ENCODE measurements at regions of chr2 and their contacts with region 1.

Region 1: GRCh38 chr2:110677530-110678456 is at the start of gene BUB1:
- DNase-seq: peak; percentile 87 to 98
- H3K4me3 ChIP-seq: peak within 1 kb of the TSS; percentile 79 to 91 (median 81)
- H3K27ac ChIP-seq: peak within 1 kb of the TSS; percentile 67
- H3K4me1 ChIP-seq: peaks cover 10 to 22% (median 12%) of the 10 kb centered on the region in 4 experiments
- H3K27me3 ChIP-seq: peaks cover 0 to 3% (median 0%) of the 10 kb centered on the region in 4 experiments; a peak in 2 of 7 replicates
- CTCF ChIP-seq: no peak
- EP300 ChIP-seq: no peak
- POLR2A ChIP-seq: peak; percentile 76 to 85
- RAD21 ChIP-seq: peak in 1 of 2 experiments; percentile 8; a peak in 1 of 4 replicates
- total RNA-seq, gene BUB1: 113 and 118 TPM in 2 replicates

Region 2: GRCh38 chr2:110702514-110703380 is 25.0 kb after region 1 on chr2:
- CTCF ChIA-PET with region 1: no interaction called
- POLR2A ChIA-PET with region 1: no interaction called
- DNase-seq: no peak
- H3K4me3 ChIP-seq: no peak overlapping the region
- H3K27ac ChIP-seq: no peak overlapping the region
- H3K4me1 ChIP-seq: no peaks in the 10 kb centered on the region
- H3K27me3 ChIP-seq: no peaks in the 10 kb centered on the region
- CTCF ChIP-seq: no peak
- EP300 ChIP-seq: no peak
- POLR2A ChIP-seq: no peak
- RAD21 ChIP-seq: no peak

Region 3: GRCh38 chr2:110732422-110733413 is 54.9 kb after region 1 on chr2 and contains the start of gene ACOXL:
- CTCF ChIA-PET with region 1: interaction called, 3 read pairs
- POLR2A ChIA-PET with region 1: interaction called, 11 read pairs
- DNase-seq: peak; percentile 68 to 89
- H3K4me3 ChIP-seq: peak within 1 kb of the TSS; percentile 61 to 81 (median 79)
- H3K27ac ChIP-seq: no peak within 1 kb of the TSS
- H3K4me1 ChIP-seq: peaks cover 3 to 18% (median 10%) of the 10 kb centered on the region in 4 experiments
- H3K27me3 ChIP-seq: peaks cover 0 to 10% (median 2%) of the 10 kb centered on the region in 4 experiments; a peak in 3 of 7 replicates
- CTCF ChIP-seq: no peak
- EP300 ChIP-seq: peak in 1 of 2 experiments; percentile 8; a peak in 1 of 3 replicates
- POLR2A ChIP-seq: peak in 1 of 2 experiments; percentile 49; a peak in 1 of 3 replicates
- RAD21 ChIP-seq: peak in 1 of 2 experiments; percentile 23; a peak in 1 of 4 replicates
- total RNA-seq, gene ACOXL: 20.6 and 20.8 TPM in 2 replicates

Region 4: GRCh38 chr2:111120253-111121027 is 442.6 kb after region 1 on chr2 and contains the start of gene BCL2L11:
- CTCF ChIA-PET with region 1: no interaction called
- POLR2A ChIA-PET with region 1: no interaction called
- DNase-seq: peak; percentile 74 to 96
- H3K4me3 ChIP-seq: peak within 1 kb of the TSS; percentile 74 to 93 (median 82)
- H3K27ac ChIP-seq: no peak within 1 kb of the TSS
- H3K4me1 ChIP-seq: peaks cover 0 to 29% (median 15%) of the 10 kb centered on the region in 4 experiments; a peak in 5 of 7 replicates
- H3K27me3 ChIP-seq: peaks cover 17 to 44% (median 37%) of the 10 kb centered on the region in 4 experiments; a peak in 6 of 7 replicates
- CTCF ChIP-seq: no peak
- EP300 ChIP-seq: no peak
- POLR2A ChIP-seq: peak in 1 of 2 experiments; percentile 95; a peak in 2 of 3 replicates
- RAD21 ChIP-seq: peak in 1 of 2 experiments; percentile 10; a peak in 1 of 4 replicates
- total RNA-seq, gene BCL2L11: 17.9 and 22.9 TPM in 2 replicates

Measured in H1 (cell line).